ENCODE measurements at regions of chr12 and their contacts with region 1.

Region 1: GRCh38 chr12:116759783-116760621 is 21.9 kb downstream of the RNFT2 start:
- DNase-seq: peak in 1 of 2 experiments; percentile 85
- H3K4me3 ChIP-seq: peak overlapping the region in 2 of 4 experiments; percentile 16 to 52; a peak in 4 of 8 replicates
- H3K27ac ChIP-seq: no peak overlapping the region
- H3K4me1 ChIP-seq: no peaks in the 10 kb centered on the region; a peak in 2 of 7 replicates
- H3K27me3 ChIP-seq: no peaks in the 10 kb centered on the region
- CTCF ChIP-seq: peak; percentile 50 to 69 (median 61)
- EP300 ChIP-seq: no peak
- POLR2A ChIP-seq: peak in 1 of 2 experiments; percentile 38; a peak in 1 of 3 replicates
- RAD21 ChIP-seq: peak in 1 of 2 experiments; percentile 22; a peak in 2 of 4 replicates

Region 2: GRCh38 chr12:116609319-116610114 is 150.5 kb before region 1 on chr12:
- CTCF ChIA-PET with region 1: no interaction called
- POLR2A ChIA-PET with region 1: no interaction called
- DNase-seq: no peak
- H3K4me3 ChIP-seq: no peak overlapping the region
- H3K27ac ChIP-seq: no peak overlapping the region
- H3K4me1 ChIP-seq: peaks cover 0 to 11% (median 8%) of the 10 kb centered on the region in 4 experiments; a peak in 6 of 7 replicates
- H3K27me3 ChIP-seq: no peaks in the 10 kb centered on the region
- CTCF ChIP-seq: peak in 1 of 3 experiments; percentile 40; a peak in 3 of 4 replicates
- EP300 ChIP-seq: no peak
- POLR2A ChIP-seq: no peak
- RAD21 ChIP-seq: peak; percentile 52 to 64

Region 3: DNA sequence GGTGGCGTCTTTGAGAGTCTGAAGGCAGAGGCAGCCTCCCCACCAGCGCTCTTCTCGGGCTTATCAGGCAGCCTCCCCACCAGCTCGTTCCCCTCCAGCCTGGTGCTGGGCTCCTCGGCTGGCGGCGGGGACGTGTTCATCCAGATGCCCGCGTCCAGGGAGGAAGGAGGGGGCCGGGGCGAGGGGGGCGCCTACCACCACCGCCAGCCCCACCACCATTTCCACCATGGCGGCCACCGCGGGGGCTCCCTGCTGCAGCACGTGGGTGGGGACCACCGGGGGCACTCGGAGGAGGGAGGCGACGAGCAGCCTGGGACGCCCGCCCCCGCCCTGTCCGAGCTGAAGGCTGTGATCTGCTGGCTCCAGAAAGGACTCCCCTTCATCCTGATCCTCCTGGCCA is 10.1 kb before region 1 on chr12:
- CTCF ChIA-PET with region 1: interaction called, 16 read pairs
- POLR2A ChIA-PET with region 1: interaction called, 5 read pairs
- DNase-seq: no peak
- H3K4me3 ChIP-seq: no peak overlapping the region
- H3K27ac ChIP-seq: no peak overlapping the region
- H3K4me1 ChIP-seq: no peaks in the 10 kb centered on the region
- H3K27me3 ChIP-seq: no peaks in the 10 kb centered on the region
- CTCF ChIP-seq: no peak
- EP300 ChIP-seq: no peak
- POLR2A ChIP-seq: no peak
- RAD21 ChIP-seq: no peak

Region 4: GRCh38 chr12:116773276-116773731 is 13.3 kb after region 1 on chr12:
- CTCF ChIA-PET with region 1: interaction called, 26 read pairs
- POLR2A ChIA-PET with region 1: interaction called, 4 read pairs
- DNase-seq: peak in 1 of 2 experiments; percentile 46
- H3K4me3 ChIP-seq: no peak overlapping the region
- H3K27ac ChIP-seq: no peak overlapping the region
- H3K4me1 ChIP-seq: no peaks in the 10 kb centered on the region; a peak in 1 of 7 replicates
- H3K27me3 ChIP-seq: no peaks in the 10 kb centered on the region
- CTCF ChIP-seq: peak; percentile 49 to 58 (median 50)
- EP300 ChIP-seq: no peak
- POLR2A ChIP-seq: no peak
- RAD21 ChIP-seq: peak; percentile 45 to 52

Region 5: GRCh38 chr12:116863275-116863767 is 103.3 kb after region 1 on chr12:
- CTCF ChIA-PET with region 1: interaction called, 10 read pairs
- POLR2A ChIA-PET with region 1: no interaction called
- DNase-seq: peak; percentile 47 to 91
- H3K4me3 ChIP-seq: no peak overlapping the region
- H3K27ac ChIP-seq: no peak overlapping the region
- H3K4me1 ChIP-seq: no peaks in the 10 kb centered on the region; a peak in 1 of 7 replicates
- H3K27me3 ChIP-seq: no peaks in the 10 kb centered on the region
- CTCF ChIP-seq: peak; percentile 82 to 96 (median 90)
- EP300 ChIP-seq: no peak
- POLR2A ChIP-seq: no peak
- RAD21 ChIP-seq: peak; percentile 69 to 76

Region 6: DNA sequence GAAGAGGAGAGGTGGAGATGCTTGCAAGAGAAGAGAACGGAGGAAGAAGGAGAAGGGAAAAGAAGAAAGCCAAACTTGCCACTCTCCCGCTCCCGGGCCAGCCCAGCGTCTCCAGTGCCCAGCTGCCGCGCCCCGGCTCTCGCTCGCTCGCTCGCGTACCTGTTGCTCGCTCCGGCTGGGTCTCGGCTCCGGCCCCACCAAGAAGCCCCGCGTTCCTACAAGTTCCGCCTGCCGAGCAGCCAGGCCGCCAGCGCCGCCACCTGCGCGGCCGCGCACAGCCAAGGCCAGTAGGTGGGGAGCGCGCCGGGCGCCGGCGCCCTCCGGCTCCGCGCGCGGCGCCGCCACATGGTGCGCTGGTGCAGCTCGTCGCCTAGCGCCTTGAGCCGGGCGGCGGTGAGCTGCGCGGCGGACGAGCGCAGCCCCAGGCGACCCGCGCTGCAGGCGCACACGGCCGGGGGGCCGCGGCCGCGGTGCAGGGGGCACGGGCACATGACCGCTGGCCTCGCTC is 120.9 kb after region 1 on chr12:
- CTCF ChIA-PET with region 1: interaction called, 15 read pairs
- POLR2A ChIA-PET with region 1: interaction called, 5 read pairs
- DNase-seq: peak; percentile 38 to 75
- H3K4me3 ChIP-seq: peak overlapping the region; percentile 46 to 89 (median 62)
- H3K27ac ChIP-seq: no peak overlapping the region
- H3K4me1 ChIP-seq: peaks cover 6 to 26% (median 12%) of the 10 kb centered on the region in 4 experiments
- H3K27me3 ChIP-seq: peaks cover 43 to 64% (median 57%) of the 10 kb centered on the region in 4 experiments
- CTCF ChIP-seq: peak in 1 of 3 experiments; percentile 28; a peak in 2 of 4 replicates
- EP300 ChIP-seq: no peak
- POLR2A ChIP-seq: peak in 1 of 2 experiments; percentile 42; a peak in 1 of 3 replicates
- RAD21 ChIP-seq: peak in 1 of 2 experiments; percentile 8; a peak in 1 of 4 replicates